CD4-positive, alpha-beta memory T cell (primary cell): ENCODE measurements at regions of chr17 and their contacts with region 1.

Region 1: GRCh38 chr17:8900626-8901585 is 33.4 kb upstream of the PIK3R6 start:
- DNase-seq: no peak
- H3K4me3 ChIP-seq: no peak overlapping the region
- H3K4me3 Mint-ChIP-seq: peak overlapping the region in 6 of 8 donors; percentile 18 to 86 (median 52)
- H3K27ac ChIP-seq: peak overlapping the region; percentile 82
- H3K27ac Mint-ChIP-seq: peak overlapping the region; percentile 96 to 100 (median 98)
- H3K4me1 ChIP-seq: peaks cover 59% of the 10 kb centered on the region
- H3K4me1 Mint-ChIP-seq: peaks cover 52 to 75% (median 65%) of the 10 kb centered on the region in 4 donors
- H3K27me3 ChIP-seq: no peaks in the 10 kb centered on the region
- H3K27me3 Mint-ChIP-seq: no peaks in the 10 kb centered on the region

Region 2: DNA sequence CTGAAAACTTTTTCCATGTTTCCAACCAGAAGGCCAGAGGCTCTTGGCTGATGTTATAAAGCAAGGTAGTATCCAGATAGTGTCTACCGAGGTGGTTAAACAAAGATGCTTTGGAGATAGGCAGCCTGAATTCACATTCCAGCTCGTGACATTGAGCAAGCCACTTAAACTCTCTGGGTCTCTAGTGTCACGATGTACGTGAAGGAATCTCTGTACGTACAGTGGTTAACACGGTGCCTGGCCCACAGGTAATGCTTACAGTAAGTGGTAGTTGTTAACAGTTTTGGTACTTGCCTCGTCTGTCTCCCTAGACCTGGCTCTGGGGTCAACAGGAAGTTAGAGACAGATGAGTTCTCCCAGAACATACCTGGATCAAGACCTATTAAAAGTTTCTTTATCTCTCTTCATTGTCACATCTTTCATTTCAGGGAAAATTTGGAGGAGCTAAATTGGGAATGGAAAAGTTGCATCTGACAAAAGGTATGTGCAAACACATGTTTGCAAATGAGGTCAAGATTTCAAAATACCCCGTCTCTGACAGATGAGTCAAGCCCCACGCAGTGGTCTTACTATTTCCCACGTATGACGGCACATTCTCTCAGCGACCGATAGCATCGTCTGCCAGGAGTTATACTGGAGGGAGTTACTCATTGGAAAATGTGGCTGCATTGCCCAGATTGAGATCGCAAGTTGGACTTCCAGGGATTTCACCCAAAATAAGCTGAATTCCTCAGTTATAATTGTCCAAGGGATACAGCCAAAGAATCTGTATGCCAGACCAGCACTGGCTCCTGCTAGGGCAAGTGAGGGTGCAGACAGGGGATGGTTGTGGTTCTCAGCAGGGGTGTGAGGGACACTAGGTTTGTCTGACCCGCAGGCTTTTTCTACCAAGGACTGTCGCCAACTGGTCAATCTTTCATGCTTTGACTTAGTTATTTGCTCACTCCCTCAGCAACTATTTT is 251.5 kb before region 1 on chr17:
- CTCF ChIA-PET with region 1: no interaction called
- POLR2A ChIA-PET with region 1: no interaction called
- intact Hi-C with region 1: no loop called
- DNase-seq: no peak
- H3K4me3 ChIP-seq: no peak overlapping the region
- H3K4me3 Mint-ChIP-seq: no peak overlapping the region
- H3K27ac ChIP-seq: no peak overlapping the region
- H3K27ac Mint-ChIP-seq: no peak overlapping the region
- H3K4me1 ChIP-seq: no peaks in the 10 kb centered on the region
- H3K4me1 Mint-ChIP-seq: no peaks in the 10 kb centered on the region
- H3K27me3 ChIP-seq: no peaks in the 10 kb centered on the region
- H3K27me3 Mint-ChIP-seq: peaks cover 18 to 45% of the 10 kb centered on the region in 2 donors

Region 3: DNA sequence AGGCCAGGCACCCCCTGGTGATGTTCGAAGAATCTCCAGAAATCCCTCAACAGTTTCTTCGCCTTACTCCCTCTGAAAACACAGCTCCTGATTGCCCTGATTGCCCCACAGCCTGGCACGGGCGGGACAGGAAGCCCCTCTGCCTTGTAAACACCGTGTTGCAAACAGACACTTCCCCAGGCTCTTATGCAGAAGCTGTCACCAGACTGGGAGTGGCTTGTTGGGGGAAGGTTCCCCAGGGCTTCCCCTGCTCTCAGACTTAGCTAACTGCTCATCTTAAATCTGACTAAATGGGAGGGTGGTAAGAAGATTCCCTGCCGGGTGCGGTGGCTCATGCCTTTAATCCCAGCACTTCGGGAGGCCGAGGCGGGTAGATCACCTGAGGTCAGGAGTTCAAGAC is 53.4 kb after region 1 on chr17:
- CTCF ChIA-PET with region 1: interaction called, 4 read pairs
- POLR2A ChIA-PET with region 1: interaction called, 53 read pairs
- intact Hi-C with region 1: no loop called
- DNase-seq: peak; percentile 80 to 96 (median 81)
- H3K4me3 ChIP-seq: peak overlapping the region in 1 of 2 donors; percentile 27
- H3K4me3 Mint-ChIP-seq: peak overlapping the region; percentile 76 to 91 (median 88)
- H3K27ac ChIP-seq: peak overlapping the region; percentile 65
- H3K27ac Mint-ChIP-seq: peak overlapping the region; percentile 92 to 100 (median 98)
- H3K4me1 ChIP-seq: peaks cover 95% of the 10 kb centered on the region
- H3K4me1 Mint-ChIP-seq: peaks cover 77 to 98% (median 92%) of the 10 kb centered on the region in 4 donors
- H3K27me3 ChIP-seq: no peaks in the 10 kb centered on the region
- H3K27me3 Mint-ChIP-seq: no peaks in the 10 kb centered on the region